ENCODE measurements at regions of chr3 and their contacts with region 1.

Region 1: DNA sequence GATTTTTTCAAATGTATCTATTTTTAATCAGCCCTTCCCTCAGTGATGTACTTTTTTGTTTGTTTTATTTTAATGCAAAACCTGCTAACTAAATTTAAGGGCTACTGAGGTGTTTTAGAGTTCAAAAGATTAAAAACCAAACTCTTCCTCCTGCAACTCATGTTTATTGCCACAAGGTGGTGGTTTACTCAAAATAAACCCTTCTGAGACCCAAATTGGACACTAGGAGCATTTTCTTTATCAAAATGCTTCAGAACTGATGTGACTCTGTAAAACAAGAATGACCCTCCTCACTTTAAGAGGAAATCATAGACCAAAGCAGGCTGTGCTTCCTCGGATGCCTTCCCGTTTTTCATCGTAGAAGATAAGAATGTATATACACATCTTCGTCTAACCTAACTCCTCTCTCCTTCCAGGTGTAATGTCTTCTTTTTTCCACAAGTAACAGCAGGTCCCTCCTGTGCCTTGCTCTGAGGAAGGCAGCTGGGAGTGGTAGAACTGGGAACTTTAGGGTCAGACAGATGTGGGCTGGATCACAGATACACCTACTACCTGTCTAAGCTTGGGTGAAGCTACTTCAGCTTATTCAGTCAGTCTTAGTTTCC is 2.9 kb upstream of the NME9 start:
- DNase-seq: no peak

Region 2: DNA sequence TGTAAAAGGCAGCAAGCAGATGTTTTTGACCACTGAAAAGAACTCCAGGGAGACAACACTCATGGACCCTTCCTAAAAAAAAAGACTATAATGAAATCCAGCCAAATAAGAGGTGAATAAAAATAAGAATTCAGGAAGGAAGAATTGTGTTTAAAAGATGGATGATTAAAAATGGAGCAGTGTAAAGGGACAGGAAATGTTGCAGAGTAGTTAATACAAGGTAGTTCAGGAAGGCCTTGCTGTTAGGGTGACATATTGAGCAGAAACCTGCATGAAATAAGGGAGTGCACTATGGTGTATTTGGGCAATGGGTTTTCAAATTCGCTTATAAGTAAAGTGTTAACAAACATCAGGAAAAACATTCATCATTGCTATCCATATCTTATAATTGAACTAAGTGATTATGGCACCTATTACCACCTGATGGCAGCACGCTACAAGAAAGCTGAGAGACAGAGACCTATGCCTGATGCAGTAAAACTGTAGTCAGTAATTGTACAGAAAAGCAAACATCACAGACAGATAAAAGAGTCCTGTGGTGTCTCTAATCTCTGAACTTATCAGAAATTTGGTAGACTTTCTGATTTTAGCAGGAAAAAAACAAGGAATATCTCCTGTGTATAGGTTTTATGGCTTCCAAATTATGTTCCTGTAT is 152.1 kb before region 1 on chr3:
- intact Hi-C with region 1: no loop called
- DNase-seq: no peak

Region 3: GRCh38 chr3:138389841-138390586 is 57.4 kb after region 1 on chr3:
- intact Hi-C with region 1: loop called in 1 of 2 experiments (anchors 10 kb)
- DNase-seq: no peak

Region 4: DNA sequence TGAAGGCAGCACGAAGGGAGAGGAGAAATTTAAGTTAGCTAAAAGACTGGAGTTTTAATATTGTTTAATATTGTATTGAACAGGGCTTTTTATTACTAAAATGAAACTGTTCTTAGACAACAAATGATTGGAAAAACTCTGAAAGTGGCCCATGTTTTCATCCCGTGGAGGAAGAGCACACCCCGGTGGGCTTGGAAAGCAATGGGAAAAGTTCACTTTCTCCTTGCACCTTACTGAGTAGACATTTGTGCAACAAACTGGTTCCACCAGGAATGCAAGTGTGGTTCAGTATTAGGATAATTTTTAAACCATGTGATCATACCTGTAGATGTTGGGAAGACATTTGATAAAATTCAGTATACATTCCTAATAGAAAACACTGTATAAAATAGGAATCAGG is 93.7 kb after region 1 on chr3:
- intact Hi-C with region 1: loop called in 1 of 2 experiments (anchors 10 kb)
- DNase-seq: no peak

Region 5: DNA sequence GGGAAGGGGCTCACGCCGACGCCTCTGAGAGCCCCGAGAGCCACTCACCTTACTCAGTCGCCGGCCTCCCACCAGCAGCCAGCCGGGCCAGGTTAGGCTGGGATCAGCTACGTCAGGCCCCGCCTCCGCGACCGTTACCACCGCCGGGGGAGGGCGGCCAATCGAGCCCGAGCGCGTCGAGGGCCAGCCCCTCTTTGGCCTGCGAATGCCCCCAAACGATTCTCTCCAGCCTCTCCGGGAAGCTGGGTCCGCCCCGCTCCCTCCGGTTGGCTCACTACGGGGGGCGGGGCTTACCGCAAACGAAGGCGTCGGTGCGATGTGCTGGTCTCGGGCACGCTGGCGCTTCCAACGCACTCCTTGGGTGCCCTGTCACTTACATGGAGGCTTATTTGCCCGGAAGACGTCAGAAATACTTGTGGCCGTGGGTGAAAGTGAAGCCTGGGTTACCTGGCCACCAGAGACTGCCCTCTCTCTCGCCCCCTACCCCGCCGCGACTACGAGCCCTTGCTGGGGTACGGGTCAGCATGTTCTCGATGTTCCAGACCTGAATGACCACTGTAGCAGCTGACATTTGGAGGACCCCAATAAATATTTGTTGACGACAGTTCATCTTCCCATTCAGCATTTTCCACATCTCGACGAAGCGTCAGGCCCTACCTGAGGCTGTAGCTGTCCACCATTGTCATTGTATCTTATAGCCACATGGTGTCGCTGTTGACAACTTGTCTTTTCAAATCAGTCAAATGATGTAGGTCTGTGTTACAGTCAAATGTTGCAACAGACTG is 261.8 kb after region 1 on chr3 and contains the start of gene CEP70:
- intact Hi-C with region 1: loop called in 1 of 2 experiments (anchors 5 kb)
- DNase-seq: peak; percentile 97
- total RNA-seq, gene CEP70: 37.0 to 52.8 TPM

Measured in posterior vena cava (tissue), 2 donors.